ENCODE measurements at regions of chr7 and their contacts with region 1.

Region 1: GRCh38 chr7:73606801-73607691 is 17.3 kb downstream of the MLXIPL start:
- DNase-seq: peak; percentile 67
- H3K27ac ChIP-seq: no peak overlapping the region
- CTCF ChIP-seq: peak; percentile 98

Region 2: GRCh38 chr7:73565675-73566340 is 41.2 kb before region 1 on chr7:
- CTCF ChIA-PET with region 1: no interaction called
- POLR2A ChIA-PET with region 1: no interaction called
- DNase-seq: no peak
- H3K27ac ChIP-seq: no peak overlapping the region
- CTCF ChIP-seq: no peak

Region 3: DNA sequence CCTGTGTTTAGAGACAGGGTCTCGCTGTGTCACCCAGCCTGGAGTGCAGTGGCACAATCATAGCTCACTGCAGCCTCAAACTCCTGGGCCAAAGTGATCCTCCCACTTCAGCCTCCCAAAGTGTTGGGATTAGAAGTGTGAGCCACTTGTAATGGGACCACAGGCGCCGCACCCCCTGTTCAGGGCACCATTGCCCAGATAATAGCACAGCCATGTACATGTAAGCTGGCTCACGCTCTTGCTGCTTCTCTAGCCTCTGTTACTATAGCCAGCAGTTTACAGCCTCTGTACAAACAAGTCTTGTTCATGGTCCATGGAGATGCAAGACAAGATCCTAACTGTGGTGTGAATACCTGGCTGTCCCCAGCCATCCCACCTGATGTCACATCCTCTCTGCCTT is 21.5 kb after region 1 on chr7:
- CTCF ChIA-PET with region 1: interaction called, 11 read pairs
- POLR2A ChIA-PET with region 1: no interaction called
- DNase-seq: no peak
- H3K27ac ChIP-seq: no peak overlapping the region
- CTCF ChIP-seq: no peak

Region 4: GRCh38 chr7:73647725-73648592 is 40.9 kb after region 1 on chr7:
- CTCF ChIA-PET with region 1: interaction called, 11 read pairs
- POLR2A ChIA-PET with region 1: no interaction called
- DNase-seq: no peak
- H3K27ac ChIP-seq: no peak overlapping the region
- CTCF ChIP-seq: peak; percentile 63

Region 5: DNA sequence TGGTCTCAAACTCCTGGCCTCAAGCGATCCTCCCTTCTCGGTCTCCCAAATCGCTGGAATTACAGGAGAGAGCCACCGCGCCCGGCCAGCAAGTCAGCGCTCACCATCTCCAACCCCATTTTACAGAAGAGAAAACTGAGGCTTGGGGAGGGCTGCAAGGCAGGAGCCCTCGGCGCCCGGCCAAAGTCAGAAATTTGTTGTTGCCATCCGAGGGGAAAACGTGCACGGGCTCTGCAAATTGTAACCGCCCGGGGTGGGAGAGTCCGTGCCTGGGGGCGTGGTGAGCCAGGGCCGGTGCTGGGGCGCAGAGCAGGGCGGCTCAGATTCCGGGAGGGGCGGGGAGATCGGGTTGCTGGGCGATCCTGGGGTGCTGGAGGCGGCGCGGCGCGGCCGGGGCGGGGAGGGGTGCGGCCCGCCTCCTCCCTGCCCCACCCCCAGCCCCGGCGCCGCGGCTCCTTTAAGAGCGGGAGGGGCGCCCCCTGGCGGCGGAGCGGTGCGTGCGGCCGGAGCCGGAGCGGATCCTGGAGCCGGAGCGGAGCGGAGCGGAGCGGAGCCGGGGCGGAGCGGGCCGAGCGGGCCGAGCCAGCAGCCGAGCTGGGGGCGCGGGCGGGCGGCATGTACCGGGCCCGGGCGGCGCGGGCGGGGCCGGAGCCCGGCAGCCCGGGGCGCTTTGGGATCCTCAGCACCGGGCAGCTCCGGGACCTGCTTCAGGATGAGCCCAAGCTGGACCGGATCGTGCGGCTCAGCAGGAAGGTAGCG is 60.5 kb after region 1 on chr7 and contains the start of gene VPS37D:
- CTCF ChIA-PET with region 1: interaction called, 19 read pairs
- POLR2A ChIA-PET with region 1: interaction called, 4 read pairs
- DNase-seq: peak; percentile 95
- H3K27ac ChIP-seq: peak within 1 kb of the TSS; percentile 44; the same call in 1 of the 2 replicates
- CTCF ChIP-seq: peak; percentile 97

Region 6: DNA sequence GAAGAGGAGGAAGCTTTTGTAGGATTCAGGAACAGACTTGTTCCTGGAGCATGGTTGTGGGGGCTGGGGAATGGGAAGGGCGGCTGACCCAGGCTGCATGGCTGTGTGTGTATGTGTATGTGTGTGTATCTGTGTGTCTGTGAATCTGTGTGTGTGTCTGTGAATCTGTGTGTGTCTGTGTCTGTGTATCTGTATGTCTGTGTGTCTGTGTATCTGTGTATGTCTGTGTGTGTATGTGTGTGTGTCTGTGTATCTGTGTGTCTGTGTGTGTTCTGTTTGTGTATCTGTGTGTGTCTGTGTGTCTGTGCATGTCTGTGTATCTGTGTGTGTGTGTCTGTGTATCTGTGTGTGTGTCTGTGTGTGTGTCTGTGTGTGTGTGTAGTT is 119.0 kb after region 1 on chr7:
- CTCF ChIA-PET with region 1: interaction called, 24 read pairs
- POLR2A ChIA-PET with region 1: no interaction called
- DNase-seq: no peak
- H3K27ac ChIP-seq: no peak overlapping the region
- CTCF ChIP-seq: peak; percentile 76

Region 7: GRCh38 chr7:73734619-73735527 is 127.8 kb after region 1 on chr7:
- CTCF ChIA-PET with region 1: interaction called, 14 read pairs
- POLR2A ChIA-PET with region 1: no interaction called
- DNase-seq: peak; percentile 84
- H3K27ac ChIP-seq: peak overlapping the region; percentile 93
- CTCF ChIP-seq: peak; percentile 96

Measured in RWPE1 (cell line).